Dorsolateral prefrontal cortex (tissue), 120 donors: ENCODE measurements at regions of chr11 and their contacts with region 1.

Region 1: GRCh38 chr11:72091005-72091691 is 10.5 kb downstream of the LRRC51 start:
- DNase-seq: peak; percentile 45 to 75 (median 66)
- H3K4me3 ChIP-seq: no peak overlapping the region
- H3K27ac ChIP-seq: peak overlapping the region in 48 of 59 donors; percentile 1 to 76 (median 38)
- H3K27me3 ChIP-seq: no peaks in the 10 kb centered on the region
- CTCF ChIP-seq: peak; percentile 49 to 98 (median 91)

Region 2: DNA sequence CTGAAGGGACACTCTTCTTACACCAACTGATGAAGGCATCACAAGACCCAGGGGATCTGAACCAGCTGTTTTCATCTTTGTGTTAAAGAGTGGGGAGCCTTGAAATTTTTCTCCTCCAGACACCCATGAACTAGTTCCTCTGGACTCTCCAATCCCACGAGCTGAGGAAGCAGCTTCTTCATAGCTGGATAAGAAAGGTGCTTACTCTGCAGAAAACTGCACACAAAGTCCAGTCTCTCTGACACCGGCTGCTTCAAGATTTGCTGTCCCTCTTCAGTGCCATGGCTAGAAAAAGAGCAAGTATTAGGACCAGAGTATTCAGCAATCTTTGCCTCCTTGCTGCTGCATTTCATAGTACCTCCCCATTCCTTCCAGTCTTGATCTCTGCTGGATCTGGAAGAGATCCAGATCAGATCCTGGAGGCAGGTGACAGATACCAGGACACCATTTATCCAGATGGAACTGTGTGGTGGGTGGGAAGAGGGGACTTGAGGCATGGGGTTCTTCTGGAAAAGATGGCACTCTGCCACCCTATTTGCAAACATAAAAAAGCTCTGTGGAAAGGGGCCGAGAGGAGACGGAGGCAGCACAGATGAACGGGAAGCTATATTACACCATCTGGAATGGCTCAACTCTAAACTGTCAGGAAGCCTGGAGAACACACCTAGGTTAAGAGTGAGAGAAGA is 66.9 kb before region 1 on chr11:
- intact Hi-C with region 1: loop called (anchors 1 to 2 kb)
- DNase-seq: no peak
- H3K4me3 ChIP-seq: no peak overlapping the region
- H3K27ac ChIP-seq: peak overlapping the region in 21 of 59 donors; percentile 2 to 74 (median 60)
- H3K27me3 ChIP-seq: no peaks in the 10 kb centered on the region
- CTCF ChIP-seq: no peak

Region 3: DNA sequence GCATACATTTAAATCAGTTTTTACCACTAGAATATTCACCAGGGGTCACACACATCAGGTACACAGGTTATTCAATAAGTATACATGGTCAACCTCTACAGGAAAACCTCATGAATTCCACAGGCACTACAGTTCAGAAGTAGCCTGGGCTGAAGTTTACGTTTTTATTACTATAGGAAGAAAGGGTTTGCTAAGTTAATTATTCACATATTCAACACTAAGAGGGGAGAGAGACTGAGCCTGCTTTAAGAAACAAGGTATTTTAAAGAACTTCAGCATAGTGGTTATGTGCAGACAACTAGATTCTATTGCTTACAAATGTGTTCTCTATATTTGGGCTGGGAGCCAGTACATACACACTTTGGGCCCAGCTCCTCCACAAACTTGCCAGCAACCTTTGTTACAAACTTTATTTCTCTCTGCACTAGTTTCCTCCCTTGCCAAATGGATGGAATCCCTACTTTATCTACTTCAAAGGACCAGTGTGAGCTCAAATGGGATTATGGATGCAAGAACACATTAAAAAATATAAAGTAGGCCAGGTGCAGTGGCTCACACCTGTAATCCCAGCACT is 60.6 kb before region 1 on chr11:
- intact Hi-C with region 1: loop called (anchors 1 to 2 kb)
- DNase-seq: no peak
- H3K4me3 ChIP-seq: peak overlapping the region in 1 of 59 donors; percentile 13
- H3K27ac ChIP-seq: peak overlapping the region in 15 of 59 donors; percentile 1 to 42 (median 18)
- H3K27me3 ChIP-seq: no peaks in the 10 kb centered on the region
- CTCF ChIP-seq: no peak